ENCODE measurements at regions of chr9 and their contacts with region 1.

Region 1: DNA sequence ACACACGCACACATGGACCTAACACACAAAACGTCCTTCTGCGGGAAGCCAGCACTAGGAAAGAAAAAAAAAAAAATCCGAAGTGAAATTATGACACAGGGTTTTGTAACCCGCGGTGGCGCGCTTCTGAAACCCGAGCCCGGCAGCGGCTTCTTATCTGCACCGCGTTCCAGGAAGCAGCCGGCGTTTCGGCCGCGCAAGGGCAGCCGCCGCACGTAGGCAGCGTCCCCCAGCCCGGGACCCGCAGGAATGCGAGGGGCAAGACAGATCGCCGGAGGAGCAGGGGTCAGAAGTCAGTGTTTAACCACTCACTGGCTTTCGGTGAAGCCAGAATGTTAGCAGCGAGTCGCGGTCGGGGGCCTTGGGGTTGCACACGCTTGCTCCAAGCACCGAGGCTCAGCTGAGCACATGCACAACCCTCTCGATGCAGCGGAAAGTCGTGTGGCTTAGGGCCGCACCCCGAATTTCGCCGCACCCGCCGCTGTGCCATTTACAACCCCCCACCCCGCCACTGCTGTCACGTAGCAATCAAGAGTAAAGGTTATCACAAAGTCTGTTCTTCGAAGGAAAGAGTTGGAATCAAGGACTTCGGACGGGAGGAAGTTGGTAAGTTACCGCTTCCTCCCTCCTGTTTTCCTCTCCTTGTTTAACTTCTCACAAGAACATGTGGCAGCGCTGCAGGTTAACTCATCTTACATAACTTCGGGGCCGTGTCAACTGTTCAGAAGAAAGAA is 167.9 kb downstream of the AUH start:
- DNase-seq: peak; percentile 85 to 94
- H3K4me3 ChIP-seq: peak overlapping the region; percentile 54 to 62
- H3K27ac ChIP-seq: peak overlapping the region; percentile 98 to 99
- H3K4me1 ChIP-seq: peaks cover 0 to 48% (median 33%) of the 10 kb centered on the region in 4 donors
- H3K27me3 ChIP-seq: no peaks in the 10 kb centered on the region
- CTCF ChIP-seq: no peak

Region 2: DNA sequence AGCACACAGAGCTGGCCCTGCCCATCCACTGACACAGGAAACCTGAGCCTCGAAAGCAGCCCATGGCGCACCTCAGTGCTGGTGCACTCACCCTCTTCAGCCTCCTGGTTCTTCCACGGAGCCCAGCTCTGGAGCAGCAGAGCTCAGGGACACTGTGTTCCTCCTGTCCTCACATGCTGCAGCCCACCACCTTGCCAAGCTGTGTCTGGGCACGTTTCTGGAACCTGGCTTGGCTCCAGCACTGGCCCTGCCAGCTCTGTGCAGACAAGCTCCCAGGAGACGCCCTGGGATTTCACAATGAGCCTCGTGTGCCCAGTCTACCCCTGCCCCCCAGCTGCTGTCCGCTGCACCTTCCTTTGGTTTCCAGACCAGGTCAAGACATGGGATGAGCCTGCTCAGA is 272.7 kb before region 1 on chr9:
- intact Hi-C with region 1: loop called (anchors 5 kb)
- DNase-seq: peak; percentile 87 to 97
- H3K4me3 ChIP-seq: no peak overlapping the region
- H3K27ac ChIP-seq: peak overlapping the region; percentile 69 to 83
- H3K4me1 ChIP-seq: peaks cover 0 to 41% (median 30%) of the 10 kb centered on the region in 4 donors
- H3K27me3 ChIP-seq: no peaks in the 10 kb centered on the region
- CTCF ChIP-seq: no peak

Region 3: DNA sequence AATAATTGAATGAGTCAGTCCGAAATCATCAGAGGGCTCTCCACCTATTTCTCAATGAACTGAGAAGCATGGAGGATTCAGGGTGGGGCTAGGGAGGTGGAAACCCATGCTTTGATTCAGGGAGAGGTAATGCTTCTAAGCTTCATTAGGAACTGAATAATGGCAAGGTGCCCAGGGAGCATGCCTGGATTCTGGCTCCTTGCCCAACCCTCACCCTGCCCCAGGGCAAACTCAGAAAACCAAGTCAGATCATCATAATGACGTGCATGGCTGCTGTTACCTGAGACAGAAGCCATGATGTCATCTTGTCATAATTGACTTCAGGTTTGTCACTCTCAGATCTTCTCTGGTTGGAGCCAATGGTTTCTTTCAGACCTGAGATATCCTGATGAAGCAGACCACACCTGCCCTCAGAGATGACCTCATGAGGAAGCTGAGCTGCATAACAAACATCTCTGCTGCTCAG is 192.6 kb before region 1 on chr9:
- intact Hi-C with region 1: no loop called
- DNase-seq: no peak
- H3K4me3 ChIP-seq: no peak overlapping the region
- H3K27ac ChIP-seq: no peak overlapping the region
- H3K4me1 ChIP-seq: no peaks in the 10 kb centered on the region
- H3K27me3 ChIP-seq: no peaks in the 10 kb centered on the region
- CTCF ChIP-seq: no peak

Region 4: GRCh38 chr9:91117959-91118703 is 75.7 kb before region 1 on chr9:
- intact Hi-C with region 1: loop called (anchors 5 kb)
- DNase-seq: peak; percentile 86 to 96
- H3K4me3 ChIP-seq: peak overlapping the region; percentile 26 to 42
- H3K27ac ChIP-seq: peak overlapping the region; percentile 72 to 83
- H3K4me1 ChIP-seq: peaks cover 0 to 46% (median 35%) of the 10 kb centered on the region in 4 donors
- H3K27me3 ChIP-seq: no peaks in the 10 kb centered on the region
- CTCF ChIP-seq: no peak

Region 5: GRCh38 chr9:91412941-91413340 is 219.1 kb after region 1 on chr9:
- intact Hi-C with region 1: no loop called
- DNase-seq: no peak
- H3K4me3 ChIP-seq: no peak overlapping the region
- H3K27ac ChIP-seq: no peak overlapping the region
- H3K4me1 ChIP-seq: peaks cover 0 to 20% (median 0%) of the 10 kb centered on the region in 4 donors
- H3K27me3 ChIP-seq: no peaks in the 10 kb centered on the region
- CTCF ChIP-seq: no peak

Region 6: DNA sequence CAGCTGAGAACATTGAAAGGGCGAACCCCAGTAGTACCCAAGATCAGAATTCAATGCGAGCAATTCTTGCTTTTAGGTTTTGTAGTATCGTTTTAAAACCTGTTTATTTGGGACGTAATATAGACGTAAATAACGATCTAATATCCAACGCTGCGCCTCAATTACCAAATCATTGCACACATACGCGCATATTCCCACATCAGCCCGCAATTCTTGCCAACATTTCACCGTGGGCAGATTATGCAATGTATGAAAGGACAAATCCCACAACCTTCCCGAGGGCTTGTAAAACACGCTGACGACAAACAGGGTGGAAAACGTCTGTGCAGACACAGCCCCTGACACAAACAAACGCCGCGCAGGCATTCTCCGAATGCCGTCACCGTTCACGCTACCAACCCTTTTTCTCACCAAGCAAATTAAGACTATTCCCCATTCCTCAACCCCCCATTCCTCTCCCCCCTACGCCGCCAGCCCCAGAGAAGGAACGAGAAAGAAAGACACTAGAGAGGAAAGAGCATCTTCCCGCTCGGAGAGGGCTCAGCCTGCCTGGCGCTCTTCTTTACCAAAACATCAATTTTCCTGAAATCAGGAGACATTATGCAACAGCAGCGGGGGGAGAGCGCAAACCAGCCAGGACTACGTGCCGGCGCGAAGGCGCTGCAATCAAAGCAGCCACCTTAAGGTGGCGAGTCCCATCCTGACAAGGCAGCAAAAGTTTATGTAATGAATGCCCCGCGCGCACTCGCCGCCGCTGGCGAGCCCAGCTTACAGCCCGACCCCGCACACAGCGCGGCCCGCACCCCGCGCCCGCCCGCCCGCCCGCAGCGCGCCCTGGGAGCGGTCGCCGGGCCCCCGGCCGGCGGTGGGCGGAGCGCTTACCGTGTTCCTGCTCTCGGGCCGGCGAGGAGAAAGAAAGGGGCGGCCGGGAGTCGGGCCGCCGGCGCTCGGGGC is 229.2 kb after region 1 on chr9:
- intact Hi-C with region 1: loop called (anchors 2 kb)
- DNase-seq: peak; percentile 85 to 93
- H3K4me3 ChIP-seq: peak overlapping the region; percentile 73 to 77
- H3K27ac ChIP-seq: peak overlapping the region; percentile 81 to 89
- H3K4me1 ChIP-seq: peaks cover 0 to 38% (median 21%) of the 10 kb centered on the region in 4 donors
- H3K27me3 ChIP-seq: no peaks in the 10 kb centered on the region
- CTCF ChIP-seq: peak in 1 of 2 experiments; percentile 20